Activated CD4-positive, alpha-beta memory T cell treated with anti-CD3 and anti-CD28 coated beads for 36 hours (primary cell): ENCODE measurements at regions of chr19 and their contacts with region 1.

Region 1: DNA sequence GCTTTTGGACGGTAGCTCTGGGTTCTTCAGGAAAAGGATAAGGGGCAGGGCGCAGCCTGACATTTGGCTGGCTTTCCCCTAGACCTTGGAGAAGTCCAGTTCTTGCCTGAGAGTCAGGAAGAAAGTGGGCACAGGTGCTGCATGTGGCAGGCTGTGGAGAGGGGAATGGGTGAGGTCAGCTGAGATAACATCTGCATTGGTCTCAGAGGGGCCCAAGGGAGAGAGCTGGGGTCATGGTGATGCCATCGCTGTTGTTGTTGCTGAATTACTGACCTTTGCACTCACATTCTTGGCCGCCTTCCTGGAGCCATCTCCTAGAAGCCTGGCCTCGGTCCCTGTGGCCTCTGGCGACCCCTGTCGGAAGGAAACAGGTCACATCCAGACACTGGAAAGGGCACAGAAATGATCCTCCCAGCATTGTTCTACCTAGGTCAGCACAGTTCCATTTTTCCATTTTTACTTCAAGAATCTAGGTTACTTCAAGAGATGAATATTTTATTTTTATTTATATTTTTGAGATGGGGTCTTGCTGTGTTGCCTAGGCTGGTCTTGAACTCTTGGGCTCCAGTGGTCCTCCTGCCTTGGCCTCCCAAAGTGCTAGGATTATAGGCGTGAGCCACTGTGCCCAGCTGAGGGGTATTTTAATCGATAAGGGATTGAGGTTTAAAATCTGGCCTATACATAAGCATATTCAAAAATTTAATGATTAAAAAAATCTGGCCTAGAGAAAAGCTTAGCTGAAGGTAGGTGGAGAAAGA is 6.5 kb upstream of the LIPE start:
- DNase-seq: peak; percentile 80
- H3K4me3 Mint-ChIP-seq: no peak overlapping the region
- H3K27ac Mint-ChIP-seq: peak overlapping the region; percentile 13
- H3K4me1 Mint-ChIP-seq: peaks cover 9% of the 10 kb centered on the region
- H3K27me3 Mint-ChIP-seq: no peaks in the 10 kb centered on the region

Region 2: GRCh38 chr19:42158926-42159325 is 274.8 kb before region 1 on chr19:
- CTCF ChIA-PET with region 1: no interaction called
- POLR2A ChIA-PET with region 1: no interaction called
- intact Hi-C with region 1: no loop called
- DNase-seq: no peak
- H3K4me3 Mint-ChIP-seq: no peak overlapping the region
- H3K27ac Mint-ChIP-seq: no peak overlapping the region
- H3K4me1 Mint-ChIP-seq: peaks cover 10% of the 10 kb centered on the region
- H3K27me3 Mint-ChIP-seq: no peaks in the 10 kb centered on the region

Region 3: DNA sequence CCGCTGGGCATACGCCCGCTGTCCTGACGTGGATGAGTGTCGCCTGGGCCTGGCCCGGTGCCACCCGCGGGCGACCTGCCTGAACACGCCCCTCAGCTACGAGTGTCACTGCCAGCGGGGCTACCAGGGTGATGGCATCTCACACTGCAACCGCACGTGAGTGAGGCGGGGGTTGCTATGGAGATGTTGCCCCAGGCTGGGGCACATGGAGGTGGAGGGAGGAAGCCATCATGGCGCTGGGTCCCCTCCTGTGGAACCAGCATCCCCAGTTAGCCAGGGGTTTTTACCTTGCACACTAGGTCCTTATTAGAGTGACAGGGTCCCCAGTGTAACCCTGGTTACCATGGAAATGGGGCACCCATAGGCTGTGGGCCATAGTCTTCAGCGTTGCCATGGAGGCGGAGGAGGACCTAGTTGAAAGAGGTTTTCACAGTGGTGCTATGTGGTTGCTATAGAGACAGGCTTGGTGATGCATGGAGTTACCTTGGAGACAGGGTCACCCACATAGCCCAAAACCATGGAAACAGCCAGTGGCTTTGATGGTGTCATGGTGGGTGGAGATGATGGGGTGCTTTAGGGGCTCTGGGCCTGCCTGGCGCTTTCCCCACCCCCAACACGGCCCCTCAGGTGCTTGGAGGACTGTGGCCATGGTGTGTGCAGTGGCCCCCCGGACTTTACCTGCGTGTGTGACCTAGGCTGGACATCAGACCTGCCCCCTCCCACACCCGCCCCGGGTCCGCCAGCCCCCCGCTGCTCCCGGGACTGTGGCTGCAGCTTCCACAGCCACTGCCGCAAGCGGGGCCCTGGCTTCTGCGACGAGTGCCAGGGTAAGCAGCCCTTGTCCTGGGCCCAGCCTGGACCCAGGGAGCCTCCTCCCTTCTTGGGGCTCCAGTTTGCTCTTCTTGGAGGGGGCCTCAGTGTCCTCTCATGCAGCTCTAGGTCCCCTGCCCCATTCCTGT is 81.1 kb before region 1 on chr19:
- CTCF ChIA-PET with region 1: no interaction called
- POLR2A ChIA-PET with region 1: no interaction called
- intact Hi-C with region 1: no loop called
- DNase-seq: peak; percentile 15
- H3K4me3 Mint-ChIP-seq: no peak overlapping the region
- H3K27ac Mint-ChIP-seq: no peak overlapping the region
- H3K4me1 Mint-ChIP-seq: no peaks in the 10 kb centered on the region
- H3K27me3 Mint-ChIP-seq: no peaks in the 10 kb centered on the region

Region 4: DNA sequence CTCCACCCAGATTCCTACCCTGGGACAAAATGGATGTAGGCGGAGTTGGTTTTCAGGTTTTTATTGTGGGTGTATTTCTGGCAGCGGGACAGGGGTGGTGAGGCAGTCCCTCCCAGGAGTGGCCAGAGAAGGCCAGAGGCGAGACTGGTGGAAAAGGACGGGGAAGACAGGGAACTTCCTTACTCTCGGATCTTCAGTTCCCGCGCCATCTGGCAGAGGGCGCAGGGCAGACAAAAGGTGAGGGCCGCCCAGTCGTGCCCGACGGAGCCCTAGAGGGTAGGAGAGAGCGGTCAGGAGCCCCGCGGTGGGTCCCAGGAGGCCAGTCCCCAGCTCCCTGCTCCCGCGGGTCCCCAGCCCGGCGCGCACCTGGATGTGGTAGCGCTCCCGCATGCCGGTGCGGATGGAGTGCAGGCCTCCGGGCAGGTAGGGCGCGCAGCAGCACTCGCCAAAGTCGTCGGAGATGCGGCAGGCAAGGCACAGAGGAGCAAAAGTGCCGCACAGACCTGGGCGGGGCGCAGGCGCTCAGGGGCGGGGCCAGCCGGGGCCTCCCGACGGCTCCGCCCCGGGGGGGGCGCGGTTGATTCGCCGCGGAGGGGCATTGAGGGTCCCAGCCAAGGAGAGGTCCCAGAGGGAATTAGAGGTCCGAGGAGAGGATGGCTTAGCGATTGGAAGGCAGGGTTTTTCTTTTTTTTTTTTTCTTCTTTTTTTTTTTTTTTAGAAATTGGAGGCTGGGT is 46.5 kb before region 1 on chr19:
- CTCF ChIA-PET with region 1: interaction called, 11 read pairs
- POLR2A ChIA-PET with region 1: no interaction called
- intact Hi-C with region 1: no loop called
- DNase-seq: peak; percentile 76
- H3K4me3 Mint-ChIP-seq: peak overlapping the region; percentile 58
- H3K27ac Mint-ChIP-seq: no peak overlapping the region
- H3K4me1 Mint-ChIP-seq: peaks cover 4% of the 10 kb centered on the region
- H3K27me3 Mint-ChIP-seq: peaks cover 29% of the 10 kb centered on the region